ENCODE measurements at regions of chr11 and their contacts with region 1.

Region 1: DNA sequence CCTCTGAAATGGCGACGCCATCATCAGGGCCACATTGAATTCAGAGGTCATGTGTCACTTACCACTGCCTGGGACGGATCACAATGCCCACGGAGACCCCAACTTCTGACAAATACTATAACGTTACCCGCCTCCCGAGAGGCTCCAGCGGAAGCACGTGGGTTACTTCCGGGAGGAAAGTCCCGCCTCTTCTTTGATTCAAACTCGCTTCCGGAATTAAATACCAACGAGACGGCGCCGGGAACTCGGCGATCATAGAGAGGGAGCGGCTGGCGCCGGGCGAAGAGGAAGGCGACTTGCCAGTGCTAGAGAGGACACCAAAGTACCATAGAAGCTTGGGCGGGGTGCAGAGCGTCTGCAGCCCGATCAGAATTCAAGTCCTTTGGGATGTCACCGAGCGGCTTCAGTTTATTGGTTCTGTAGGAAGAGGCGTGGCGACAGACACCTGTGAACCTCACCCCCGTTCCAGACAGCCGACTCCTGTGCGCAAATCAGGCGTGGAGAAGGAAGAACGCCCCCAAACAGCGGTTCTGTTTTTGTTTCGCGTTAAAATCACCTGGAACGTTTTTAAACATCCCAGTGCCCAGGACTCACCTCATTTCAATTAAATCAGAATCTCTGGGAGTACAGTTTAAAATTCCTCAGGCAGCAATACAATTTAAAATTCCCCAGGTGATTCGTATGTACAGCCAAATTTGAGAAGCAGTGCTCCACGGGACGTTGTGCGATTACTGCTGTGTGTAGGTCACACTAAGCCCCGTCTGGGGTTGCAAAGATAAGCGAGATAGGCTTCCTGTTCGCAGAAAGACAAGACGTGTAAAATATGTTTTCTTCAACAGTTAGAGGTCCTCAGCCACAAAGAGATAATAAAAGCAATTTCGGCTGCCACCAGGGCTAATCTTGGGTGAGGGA is at the start of gene TIMM10:
- DNase-seq: peak; percentile 84 to 97 (median 95)
- H3K4me3 ChIP-seq: peak within 1 kb of the TSS; percentile 88
- H3K4me3 Mint-ChIP-seq: peak within 1 kb of the TSS; percentile 85 to 96 (median 90)
- H3K27ac ChIP-seq: peak within 1 kb of the TSS; percentile 86
- H3K27ac Mint-ChIP-seq: peak within 1 kb of the TSS; percentile 89 to 99 (median 97)
- H3K4me1 ChIP-seq: peaks cover 19% of the 10 kb centered on the region
- H3K4me1 Mint-ChIP-seq: peaks cover 26 to 41% (median 35%) of the 10 kb centered on the region in 3 donors
- H3K27me3 ChIP-seq: no peaks in the 10 kb centered on the region
- H3K27me3 Mint-ChIP-seq: peaks cover 0 to 3% of the 10 kb centered on the region in 2 donors
- total RNA-seq, gene TIMM10: 151 to 154 TPM

Region 2: GRCh38 chr11:57345555-57346211 is 185.2 kb before region 1 on chr11:
- CTCF ChIA-PET with region 1: interaction called, 11 read pairs
- POLR2A ChIA-PET with region 1: no interaction called
- DNase-seq: peak; percentile 50 to 76 (median 62)
- H3K4me3 ChIP-seq: no peak overlapping the region
- H3K4me3 Mint-ChIP-seq: no peak overlapping the region
- H3K27ac ChIP-seq: no peak overlapping the region
- H3K27ac Mint-ChIP-seq: no peak overlapping the region
- H3K4me1 ChIP-seq: no peaks in the 10 kb centered on the region
- H3K4me1 Mint-ChIP-seq: peaks cover 0 to 5% (median 3%) of the 10 kb centered on the region in 3 donors
- H3K27me3 ChIP-seq: no peaks in the 10 kb centered on the region
- H3K27me3 Mint-ChIP-seq: peaks cover 0 to 4% of the 10 kb centered on the region in 2 donors

Region 3: DNA sequence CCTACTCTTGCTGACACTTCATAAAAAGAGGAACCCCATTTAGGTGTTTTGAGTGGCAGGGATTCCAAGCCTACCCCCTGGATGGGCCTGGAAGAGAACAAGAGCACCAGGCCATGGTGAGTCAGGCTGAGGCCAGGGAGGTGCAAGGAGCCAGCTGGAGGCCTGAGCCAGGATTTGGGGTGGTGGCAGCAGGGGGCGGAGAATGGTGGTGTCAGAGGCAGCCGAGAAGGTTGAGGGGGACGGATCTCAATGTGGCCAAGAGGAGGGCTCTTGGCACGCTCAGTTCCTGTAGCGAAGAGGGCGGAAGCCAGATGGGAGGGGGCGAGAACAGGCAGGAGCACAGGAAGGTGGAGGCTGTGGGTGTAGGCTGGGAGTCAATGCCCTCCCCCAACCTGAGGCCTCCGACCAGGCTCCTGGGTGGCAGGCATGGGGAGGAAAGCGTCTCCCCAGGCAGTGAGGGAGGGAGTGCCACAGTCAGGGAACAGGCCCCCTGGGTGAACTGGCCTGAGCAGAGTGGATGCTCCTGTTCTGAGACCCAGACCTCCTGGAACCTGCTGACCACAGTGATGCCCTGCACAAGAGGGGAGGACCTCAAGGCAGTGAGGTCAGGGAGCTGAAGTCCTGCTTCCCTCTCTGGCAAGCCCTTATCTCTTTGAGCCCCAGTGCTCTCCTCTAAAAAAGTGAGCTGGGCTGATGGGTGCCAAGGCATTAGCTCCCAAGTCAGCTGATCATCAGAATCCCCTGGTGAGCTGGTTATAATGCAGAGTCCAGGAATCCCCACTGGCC is 56.6 kb before region 1 on chr11:
- CTCF ChIA-PET with region 1: interaction called, 18 read pairs
- POLR2A ChIA-PET with region 1: no interaction called
- DNase-seq: peak; percentile 8 to 68 (median 36)
- H3K4me3 ChIP-seq: peak overlapping the region; percentile 28
- H3K4me3 Mint-ChIP-seq: peak overlapping the region; percentile 34 to 90 (median 56)
- H3K27ac ChIP-seq: no peak overlapping the region
- H3K27ac Mint-ChIP-seq: peak overlapping the region in 5 of 8 donors; percentile 11 to 84 (median 70)
- H3K4me1 ChIP-seq: peaks cover 27% of the 10 kb centered on the region
- H3K4me1 Mint-ChIP-seq: peaks cover 22 to 44% (median 22%) of the 10 kb centered on the region in 3 donors
- H3K27me3 ChIP-seq: peaks cover 5% of the 10 kb centered on the region
- H3K27me3 Mint-ChIP-seq: peaks cover 1 to 3% of the 10 kb centered on the region in 2 donors

Region 4: DNA sequence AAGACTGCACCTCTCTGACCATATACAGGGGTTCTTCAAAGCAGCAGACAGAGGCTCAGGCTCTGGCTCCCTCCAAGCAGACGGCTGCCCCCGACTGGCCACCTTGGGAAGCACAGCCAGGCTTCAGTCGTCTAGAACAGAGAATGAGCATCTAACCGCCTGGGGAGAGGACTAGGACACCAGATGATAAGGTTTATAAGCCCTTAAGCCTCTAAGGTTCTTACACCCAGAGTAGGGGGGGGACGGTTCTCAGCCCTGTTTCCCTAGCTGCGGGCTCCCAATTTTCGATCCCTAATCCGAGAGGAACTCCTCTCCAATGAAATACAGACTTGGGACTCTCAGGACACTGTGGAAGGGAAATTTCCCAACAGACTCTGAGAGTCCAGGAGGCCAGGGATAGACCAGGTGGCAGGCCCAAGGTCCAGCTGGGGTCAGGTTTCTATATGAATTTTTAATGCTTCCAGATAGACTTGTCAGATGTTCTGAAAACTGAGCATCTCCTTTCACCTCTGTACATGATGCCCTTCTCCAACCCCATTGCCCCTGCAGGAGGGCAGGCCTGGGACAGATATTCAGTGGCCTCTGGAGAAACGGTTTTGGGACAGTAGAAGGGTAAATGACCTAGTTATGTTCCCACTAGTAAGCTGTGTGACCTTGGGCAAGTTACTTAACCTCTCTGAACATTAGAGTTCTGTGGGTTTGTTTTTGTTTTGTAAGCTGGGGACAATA is 50.3 kb before region 1 on chr11:
- CTCF ChIA-PET with region 1: interaction called, 14 read pairs
- POLR2A ChIA-PET with region 1: no interaction called
- DNase-seq: peak in 4 of 5 donors; percentile 34 to 71 (median 45)
- H3K4me3 ChIP-seq: no peak overlapping the region
- H3K4me3 Mint-ChIP-seq: peak overlapping the region in 2 of 7 donors; percentile 4 to 8
- H3K27ac ChIP-seq: no peak overlapping the region
- H3K27ac Mint-ChIP-seq: peak overlapping the region in 3 of 8 donors; percentile 2 to 50 (median 3)
- H3K4me1 ChIP-seq: peaks cover 7% of the 10 kb centered on the region
- H3K4me1 Mint-ChIP-seq: peaks cover 10 to 37% (median 16%) of the 10 kb centered on the region in 3 donors
- H3K27me3 ChIP-seq: no peaks in the 10 kb centered on the region
- H3K27me3 Mint-ChIP-seq: peaks cover 11 to 13% of the 10 kb centered on the region in 2 donors

Region 5: DNA sequence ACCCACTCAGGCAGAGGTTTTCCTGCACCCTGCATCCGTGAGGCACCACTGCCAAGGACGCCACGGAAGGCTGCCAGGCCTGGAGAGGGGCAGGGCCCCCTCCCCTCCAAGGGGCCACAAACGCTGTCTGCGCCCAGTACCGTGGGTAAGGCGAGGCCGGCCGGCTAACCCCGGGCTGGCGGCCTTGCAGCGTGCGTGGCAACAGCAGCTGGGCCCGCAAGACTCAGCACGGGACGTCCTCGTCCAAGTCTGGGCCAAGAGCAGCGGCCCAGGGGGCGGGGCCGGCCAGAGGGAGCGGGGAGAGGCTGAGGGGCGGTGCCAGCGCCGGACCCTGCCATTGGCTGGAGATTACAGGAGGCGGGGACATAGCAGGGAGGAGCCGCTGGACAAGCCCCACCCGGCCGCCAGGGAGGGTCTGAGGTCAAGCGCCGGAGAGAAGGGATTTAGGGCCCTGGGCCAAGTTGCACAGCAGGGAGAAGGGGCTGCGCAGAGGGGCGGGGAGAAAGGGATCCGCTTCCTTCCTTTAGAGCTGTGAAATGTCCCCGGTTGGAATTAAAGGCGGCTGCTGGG is 31.4 kb before region 1 on chr11:
- CTCF ChIA-PET with region 1: interaction called, 498 read pairs
- POLR2A ChIA-PET with region 1: no interaction called
- DNase-seq: no peak
- H3K4me3 ChIP-seq: no peak overlapping the region
- H3K4me3 Mint-ChIP-seq: no peak overlapping the region
- H3K27ac ChIP-seq: no peak overlapping the region
- H3K27ac Mint-ChIP-seq: peak overlapping the region in 2 of 8 donors; percentile 12 to 77
- H3K4me1 ChIP-seq: no peaks in the 10 kb centered on the region
- H3K4me1 Mint-ChIP-seq: peaks cover 0 to 1% (median 0%) of the 10 kb centered on the region in 3 donors
- H3K27me3 ChIP-seq: no peaks in the 10 kb centered on the region
- H3K27me3 Mint-ChIP-seq: no peaks in the 10 kb centered on the region

Region 6: DNA sequence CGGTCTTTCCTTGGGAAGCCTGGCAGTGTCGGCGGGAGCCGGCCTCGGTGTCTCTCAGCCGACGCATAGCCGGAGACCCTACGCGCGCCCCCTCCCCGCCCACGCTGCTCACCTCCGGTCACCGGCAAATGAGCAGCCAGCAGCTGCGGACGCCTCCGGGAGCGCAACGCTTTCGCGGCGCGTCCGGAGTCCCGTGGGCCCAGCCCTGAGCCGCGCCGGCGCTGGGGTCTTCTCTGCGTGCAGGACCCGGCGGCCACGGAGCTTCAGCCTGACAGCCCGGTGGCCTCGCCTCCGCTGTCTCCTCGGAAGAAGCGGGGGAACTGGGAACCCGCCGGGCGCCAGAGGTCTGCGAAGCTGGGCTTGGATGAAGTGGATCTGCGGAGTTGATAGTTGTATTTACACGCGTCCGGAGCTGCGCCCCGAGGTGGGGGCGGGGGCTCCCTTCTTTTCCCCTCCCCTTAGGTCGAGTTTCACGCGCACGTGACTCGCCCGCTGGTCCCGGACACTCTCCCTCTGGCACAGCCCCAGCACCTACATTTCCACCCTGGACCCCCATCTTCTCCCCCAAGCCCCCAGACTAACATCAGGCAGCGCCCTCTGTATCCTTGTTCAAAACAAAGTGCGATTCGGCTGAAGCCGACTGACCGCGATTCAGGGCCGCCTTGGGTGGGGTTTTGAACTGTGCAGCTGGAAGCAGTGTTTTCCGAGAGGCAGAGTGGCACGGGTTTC is 15.4 kb before region 1 on chr11 and contains the start of gene SLC43A1:
- CTCF ChIA-PET with region 1: interaction called, 77 read pairs
- POLR2A ChIA-PET with region 1: interaction called, 7 read pairs
- DNase-seq: peak in 1 of 5 donors; percentile 21
- H3K4me3 ChIP-seq: peak within 1 kb of the TSS; percentile 86
- H3K4me3 Mint-ChIP-seq: peak within 1 kb of the TSS; percentile 97 to 99 (median 98)
- H3K27ac ChIP-seq: peak within 1 kb of the TSS; percentile 61
- H3K27ac Mint-ChIP-seq: peak within 1 kb of the TSS; percentile 79 to 95 (median 90)
- H3K4me1 ChIP-seq: peaks cover 18% of the 10 kb centered on the region
- H3K4me1 Mint-ChIP-seq: peaks cover 24 to 36% (median 32%) of the 10 kb centered on the region in 3 donors
- H3K27me3 ChIP-seq: no peaks in the 10 kb centered on the region
- H3K27me3 Mint-ChIP-seq: peaks cover 0 to 3% of the 10 kb centered on the region in 2 donors
- total RNA-seq, gene SLC43A1: 24.2 to 25.3 TPM